ENCODE measurements at regions of chr6 and their contacts with region 1.

Region 1: GRCh38 chr6:39100358-39100757 is 14.6 kb downstream of the SAYSD1 start:
- DNase-seq: no peak
- ATAC-seq: no peak
- H3K4me3 ChIP-seq: no peak overlapping the region
- H3K27ac ChIP-seq: no peak overlapping the region
- H3K4me1 ChIP-seq: no peaks in the 10 kb centered on the region
- CTCF ChIP-seq: no peak
- EP300 ChIP-seq: no peak
- POLR2A ChIP-seq: no peak
- RAD21 ChIP-seq: no peak

Region 2: DNA sequence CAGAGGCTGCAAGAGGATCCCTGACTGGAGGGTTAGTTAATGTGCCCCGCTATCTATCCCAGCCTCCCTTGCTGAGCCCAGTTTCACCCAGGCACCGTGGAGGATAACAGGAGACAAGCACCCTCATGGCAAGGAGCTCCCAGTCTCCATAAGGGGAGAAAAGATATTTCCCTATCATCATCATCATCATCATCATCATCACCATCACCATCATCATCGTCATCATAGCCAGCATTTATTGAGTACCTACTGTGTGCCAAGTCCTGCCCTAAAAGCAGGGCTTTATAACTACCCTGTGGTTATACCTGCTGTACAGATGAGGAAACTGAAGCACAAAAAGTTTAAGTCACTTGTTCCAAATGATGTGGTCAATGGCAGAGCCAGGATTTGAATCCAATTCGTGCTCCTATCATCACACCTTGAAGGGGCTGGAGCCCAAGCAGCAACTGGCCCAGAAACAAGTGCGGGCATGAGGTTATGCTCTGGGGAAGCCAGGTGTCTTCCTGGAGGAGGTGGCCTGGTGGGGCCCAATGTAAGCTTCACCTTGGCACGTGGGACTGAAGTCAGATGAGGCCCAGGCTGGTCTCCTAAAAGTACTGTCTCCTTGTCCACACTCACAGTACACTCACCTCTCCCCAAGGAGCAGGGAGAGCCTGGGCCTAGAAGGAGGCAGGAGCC is 41.7 kb before region 1 on chr6:
- CTCF ChIA-PET with region 1: no interaction called
- POLR2A ChIA-PET with region 1: interaction called, 10 read pairs
- DNase-seq: no peak
- ATAC-seq: no peak
- H3K4me3 ChIP-seq: no peak overlapping the region
- H3K27ac ChIP-seq: no peak overlapping the region
- H3K4me1 ChIP-seq: no peaks in the 10 kb centered on the region
- CTCF ChIP-seq: no peak
- EP300 ChIP-seq: no peak
- POLR2A ChIP-seq: no peak
- RAD21 ChIP-seq: no peak

Measured in A549 (cell line).